Activated B cell treated with CpG ODN at 0.5 μM for 24 hours (primary cell): ENCODE measurements at regions of chr12 and their contacts with region 1.

Region 1: DNA sequence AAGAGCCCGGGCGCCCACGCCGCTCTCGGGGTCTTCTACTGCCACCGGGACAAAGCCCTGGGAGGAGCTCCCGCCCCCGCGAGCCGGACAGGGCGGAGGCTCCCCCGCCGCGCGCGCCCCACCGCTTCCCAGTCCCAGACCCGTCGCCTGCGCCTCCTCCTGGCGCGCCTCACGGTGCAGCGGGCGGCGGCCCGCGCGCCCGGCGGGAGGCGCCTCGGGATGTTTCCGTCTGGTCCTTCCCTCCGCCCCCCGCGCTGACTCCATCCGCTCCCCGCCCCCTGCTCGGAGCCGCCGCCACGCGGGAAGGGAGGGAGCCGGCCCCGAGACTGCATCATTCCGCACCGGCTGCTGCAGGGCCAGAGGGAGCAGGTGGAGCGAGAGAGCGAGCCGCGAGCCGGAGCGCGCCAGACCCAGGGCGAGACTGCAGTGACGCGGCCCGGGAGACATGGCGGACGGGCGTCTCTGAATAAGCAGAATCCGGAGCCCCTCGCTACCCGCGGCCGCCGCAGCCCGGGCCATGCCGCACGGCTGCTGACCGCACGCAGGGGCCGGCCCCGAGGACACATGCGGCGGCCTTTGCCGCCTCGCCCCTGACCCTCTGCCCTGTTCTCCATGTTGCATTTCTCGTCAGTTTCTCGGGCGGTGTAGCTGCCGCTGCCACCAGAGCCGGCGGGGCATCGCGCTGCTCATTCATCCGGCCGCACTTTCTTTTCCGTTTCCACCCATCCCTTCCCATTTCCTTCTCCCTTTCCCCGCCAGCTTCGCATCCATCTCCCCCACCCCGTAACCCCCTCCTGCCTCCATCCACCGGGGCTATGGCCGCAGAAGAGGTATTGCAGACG is at the start of gene BICD1:
- DNase-seq: peak; percentile 69
- ATAC-seq: peak; percentile 78
- H3K4me3 Mint-ChIP-seq: peak within 1 kb of the TSS; percentile 95
- H3K27ac Mint-ChIP-seq: peak within 1 kb of the TSS; percentile 95
- H3K4me1 Mint-ChIP-seq: peaks cover 28% of the 10 kb centered on the region
- H3K27me3 Mint-ChIP-seq: no peaks in the 10 kb centered on the region
- CTCF ChIP-seq: no peak
- total RNA-seq, gene BICD1: 55.5 and 67.6 TPM in 2 replicates

Region 2: GRCh38 chr12:31989571-31990362 is 117.0 kb before region 1 on chr12:
- CTCF ChIA-PET with region 1: no interaction called
- POLR2A ChIA-PET with region 1: no interaction called
- intact Hi-C with region 1: no loop called
- DNase-seq: no peak
- ATAC-seq: no peak
- H3K4me3 Mint-ChIP-seq: no peak overlapping the region
- H3K27ac Mint-ChIP-seq: peak overlapping the region; percentile 11
- H3K4me1 Mint-ChIP-seq: peaks cover 41% of the 10 kb centered on the region
- H3K27me3 Mint-ChIP-seq: no peaks in the 10 kb centered on the region
- CTCF ChIP-seq: no peak

Region 3: GRCh38 chr12:32062881-32063280 is 43.9 kb before region 1 on chr12:
- CTCF ChIA-PET with region 1: interaction called, 4 read pairs
- POLR2A ChIA-PET with region 1: no interaction called
- intact Hi-C with region 1: loop called (anchors 5 kb)
- DNase-seq: no peak
- ATAC-seq: no peak
- H3K4me3 Mint-ChIP-seq: no peak overlapping the region
- H3K27ac Mint-ChIP-seq: no peak overlapping the region
- H3K4me1 Mint-ChIP-seq: peaks cover 14% of the 10 kb centered on the region
- H3K27me3 Mint-ChIP-seq: no peaks in the 10 kb centered on the region
- CTCF ChIP-seq: no peak

Region 4: GRCh38 chr12:32264961-32265360 is 158.2 kb after region 1 on chr12:
- CTCF ChIA-PET with region 1: no interaction called
- POLR2A ChIA-PET with region 1: interaction called, 17 read pairs
- intact Hi-C with region 1: no loop called
- DNase-seq: peak; percentile 31
- ATAC-seq: peak; percentile 67
- H3K4me3 Mint-ChIP-seq: peak overlapping the region; percentile 52
- H3K27ac Mint-ChIP-seq: peak overlapping the region; percentile 97
- H3K4me1 Mint-ChIP-seq: peaks cover 43% of the 10 kb centered on the region
- H3K27me3 Mint-ChIP-seq: no peaks in the 10 kb centered on the region
- CTCF ChIP-seq: no peak

Region 5: DNA sequence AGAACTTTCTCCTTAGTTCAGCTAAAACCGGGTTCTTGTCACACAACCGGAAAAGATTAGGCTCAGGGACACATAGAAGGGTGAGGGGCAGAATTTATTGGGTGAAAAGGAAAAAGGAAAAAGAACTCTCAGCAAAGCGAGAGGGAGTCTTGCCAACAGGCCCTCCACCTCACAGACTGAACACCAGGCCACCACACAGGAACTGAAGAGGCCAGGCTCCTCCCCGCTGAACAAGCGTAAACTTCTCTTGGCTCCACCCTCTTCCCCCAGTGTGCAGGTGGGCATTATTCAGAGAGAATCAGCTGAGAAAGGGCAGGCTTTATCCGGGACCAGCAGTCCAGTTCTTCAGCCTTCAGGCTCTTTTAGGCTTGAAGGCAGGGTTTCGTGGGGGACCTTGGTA is 167.0 kb after region 1 on chr12:
- CTCF ChIA-PET with region 1: no interaction called
- POLR2A ChIA-PET with region 1: interaction called, 20 read pairs
- intact Hi-C with region 1: no loop called
- DNase-seq: peak; percentile 47
- ATAC-seq: peak; percentile 96
- H3K4me3 Mint-ChIP-seq: peak overlapping the region; percentile 77
- H3K27ac Mint-ChIP-seq: peak overlapping the region; percentile 99
- H3K4me1 Mint-ChIP-seq: peaks cover 39% of the 10 kb centered on the region
- H3K27me3 Mint-ChIP-seq: no peaks in the 10 kb centered on the region
- CTCF ChIP-seq: no peak